Caco-2 (cell line): ENCODE measurements at regions of chr3 and their contacts with region 1.

Region 1: DNA sequence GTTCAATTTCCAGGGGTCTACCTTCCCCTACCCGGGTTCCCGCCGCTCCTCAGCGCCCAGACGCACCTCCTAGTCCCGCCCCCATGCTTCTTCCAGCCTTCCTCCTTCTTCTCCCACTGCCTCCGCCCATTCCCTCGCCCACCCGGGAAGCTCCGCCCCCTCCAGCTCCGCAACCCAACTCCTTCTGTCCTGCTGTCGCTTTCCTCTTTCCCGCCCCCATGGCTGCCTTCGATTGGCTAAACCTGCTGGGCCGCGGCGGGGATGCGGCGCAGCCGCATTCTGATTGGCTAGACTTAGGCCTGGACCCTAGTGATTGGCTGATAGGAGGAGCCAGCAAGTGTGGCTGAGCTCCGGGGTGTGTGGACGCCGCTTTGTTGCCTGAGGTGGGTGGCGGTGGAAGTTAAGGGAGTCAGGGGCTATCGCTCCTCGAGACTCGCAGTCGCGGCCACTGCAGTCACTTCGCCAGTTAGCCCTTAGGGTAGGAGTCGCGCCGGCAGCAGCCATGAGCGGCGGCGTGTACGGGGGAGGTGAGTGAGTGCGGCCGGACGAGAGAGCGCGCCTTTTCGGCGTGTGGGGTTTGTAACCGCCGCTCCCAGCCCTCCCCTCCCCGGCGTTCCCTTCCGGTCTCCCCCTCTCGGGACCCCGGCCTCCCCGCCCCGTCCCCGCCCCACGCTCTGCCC is at the start of gene ACTL6A:
- DNase-seq: peak; percentile 99 to 100
- H3K4me3 ChIP-seq: peak within 1 kb of the TSS; percentile 78
- H3K4me3 Mint-ChIP-seq: peak within 1 kb of the TSS; percentile 97
- H3K27ac Mint-ChIP-seq: peak within 1 kb of the TSS; percentile 96
- H3K4me1 ChIP-seq: peaks cover 5% of the 10 kb centered on the region; the same call in 1 of the 2 replicates
- H3K4me1 Mint-ChIP-seq: peaks cover 6% of the 10 kb centered on the region
- H3K27me3 ChIP-seq: no peaks in the 10 kb centered on the region
- H3K27me3 Mint-ChIP-seq: no peaks in the 10 kb centered on the region
- CTCF ChIP-seq: no peak
- total RNA-seq, gene ACTL6A: 75.0 and 89.2 TPM in 2 replicates

Region 2: GRCh38 chr3:179015551-179016020 is 547.1 kb before region 1 on chr3:
- CTCF ChIA-PET with region 1: no interaction called
- POLR2A ChIA-PET with region 1: no interaction called
- intact Hi-C with region 1: loop called (anchors 10 kb)
- DNase-seq: peak; percentile 47 to 80
- H3K4me3 ChIP-seq: no peak overlapping the region
- H3K4me3 Mint-ChIP-seq: no peak overlapping the region
- H3K27ac Mint-ChIP-seq: no peak overlapping the region
- H3K4me1 ChIP-seq: no peaks in the 10 kb centered on the region
- H3K4me1 Mint-ChIP-seq: no peaks in the 10 kb centered on the region
- H3K27me3 ChIP-seq: no peaks in the 10 kb centered on the region
- H3K27me3 Mint-ChIP-seq: peaks cover 2% of the 10 kb centered on the region
- CTCF ChIP-seq: peak; percentile 78 to 81

Region 3: DNA sequence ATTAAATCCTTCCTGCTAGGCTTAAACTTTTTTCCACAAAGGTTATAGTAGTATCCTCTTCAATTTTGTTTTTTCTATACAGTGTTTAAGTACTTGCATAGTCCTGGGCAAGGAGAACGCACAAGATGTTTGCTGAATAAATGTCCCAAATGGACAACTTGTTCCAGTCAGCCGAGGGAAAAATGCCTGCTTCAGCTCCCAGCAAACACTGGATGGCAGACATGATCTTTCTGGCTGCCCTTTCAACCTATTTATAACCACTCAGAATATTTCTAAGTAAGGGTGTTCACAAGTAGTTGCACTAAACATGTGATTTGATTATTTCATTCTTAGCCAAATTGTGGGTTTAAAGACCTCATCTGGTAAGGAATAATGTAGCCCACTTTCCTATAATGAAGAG is 141.2 kb before region 1 on chr3:
- CTCF ChIA-PET with region 1: interaction called, 7 read pairs
- POLR2A ChIA-PET with region 1: no interaction called
- intact Hi-C with region 1: loop called (anchors 1 kb)
- DNase-seq: peak in 1 of 2 experiments; percentile 27
- H3K4me3 ChIP-seq: no peak overlapping the region
- H3K4me3 Mint-ChIP-seq: no peak overlapping the region
- H3K27ac Mint-ChIP-seq: no peak overlapping the region
- H3K4me1 ChIP-seq: no peaks in the 10 kb centered on the region
- H3K4me1 Mint-ChIP-seq: no peaks in the 10 kb centered on the region
- H3K27me3 ChIP-seq: no peaks in the 10 kb centered on the region
- H3K27me3 Mint-ChIP-seq: no peaks in the 10 kb centered on the region
- CTCF ChIP-seq: peak; percentile 36 to 45

Region 4: GRCh38 chr3:179446501-179446900 is 116.2 kb before region 1 on chr3:
- CTCF ChIA-PET with region 1: interaction called, 9 read pairs
- POLR2A ChIA-PET with region 1: interaction called, 6 read pairs
- intact Hi-C with region 1: loop called (anchors 1 kb)
- DNase-seq: peak in 1 of 2 experiments; percentile 44
- H3K4me3 ChIP-seq: no peak overlapping the region
- H3K4me3 Mint-ChIP-seq: no peak overlapping the region
- H3K27ac Mint-ChIP-seq: no peak overlapping the region
- H3K4me1 ChIP-seq: no peaks in the 10 kb centered on the region
- H3K4me1 Mint-ChIP-seq: peaks cover under 1% of the 10 kb centered on the region
- H3K27me3 ChIP-seq: no peaks in the 10 kb centered on the region
- H3K27me3 Mint-ChIP-seq: peaks cover 5% of the 10 kb centered on the region
- CTCF ChIP-seq: peak; percentile 45 to 52

Region 5: DNA sequence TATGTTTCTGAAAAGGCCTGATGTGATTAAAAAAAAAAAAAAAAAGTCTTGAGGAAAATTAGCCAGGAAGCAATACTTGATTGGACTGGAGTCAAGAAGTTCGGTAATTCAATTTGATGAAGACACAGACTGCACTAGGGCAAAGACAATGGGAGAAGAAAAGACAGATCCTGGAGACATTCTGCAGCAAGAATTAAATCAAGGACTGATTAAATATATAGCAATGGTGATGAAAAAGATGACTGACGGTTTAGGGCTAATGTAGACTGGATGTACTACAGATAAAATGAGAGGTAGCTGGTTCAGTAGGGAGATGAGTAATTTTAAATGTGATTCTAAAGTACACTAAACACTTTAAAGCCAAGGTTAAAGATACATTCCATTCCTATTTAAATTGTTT is 27.9 kb after region 1 on chr3:
- CTCF ChIA-PET with region 1: no interaction called
- POLR2A ChIA-PET with region 1: no interaction called
- intact Hi-C with region 1: no loop called
- DNase-seq: no peak
- H3K4me3 ChIP-seq: no peak overlapping the region
- H3K4me3 Mint-ChIP-seq: no peak overlapping the region
- H3K27ac Mint-ChIP-seq: no peak overlapping the region
- H3K4me1 ChIP-seq: no peaks in the 10 kb centered on the region
- H3K4me1 Mint-ChIP-seq: no peaks in the 10 kb centered on the region
- H3K27me3 ChIP-seq: no peaks in the 10 kb centered on the region
- H3K27me3 Mint-ChIP-seq: no peaks in the 10 kb centered on the region
- CTCF ChIP-seq: no peak

Region 6: DNA sequence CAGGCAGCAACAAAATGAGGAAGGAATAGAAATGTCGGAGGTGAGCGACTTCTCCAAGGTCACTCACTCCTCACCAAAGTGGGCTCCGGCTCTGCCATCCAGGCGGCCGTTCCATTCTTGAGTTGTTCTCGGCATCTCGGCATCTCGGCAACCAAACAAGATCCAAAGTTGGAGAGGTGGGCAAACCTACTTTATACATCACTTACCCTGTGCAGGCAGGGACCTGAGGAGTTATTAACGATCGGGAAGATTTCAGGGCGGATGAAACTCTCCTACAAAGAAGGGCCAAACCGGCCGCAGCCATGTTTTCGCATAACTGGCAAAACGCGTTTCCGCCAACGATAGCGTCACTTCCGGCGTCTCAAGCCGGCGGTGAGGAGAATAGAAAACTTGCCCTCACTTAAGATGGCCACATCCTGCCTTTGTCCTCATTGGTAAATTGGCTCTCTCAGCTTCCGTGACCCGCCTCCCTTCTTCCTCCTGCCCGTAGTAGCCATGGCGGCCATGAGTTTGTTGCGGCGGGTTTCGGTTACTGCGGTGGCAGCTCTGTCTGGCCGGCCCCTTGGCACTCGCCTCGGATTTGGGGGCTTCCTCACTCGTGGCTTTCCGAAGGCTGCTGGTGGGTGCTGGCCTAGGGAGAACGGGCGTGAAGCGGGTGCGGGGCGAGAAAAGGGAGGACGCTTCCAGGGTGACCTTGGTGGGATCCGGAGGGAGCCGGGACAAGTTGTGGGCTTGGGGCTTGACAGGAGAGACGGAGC is 41.8 kb after region 1 on chr3 and contains the starts of genes MRPL47 and NDUFB5:
- CTCF ChIA-PET with region 1: no interaction called
- POLR2A ChIA-PET with region 1: interaction called, 3 read pairs
- intact Hi-C with region 1: loop called (anchors 1 kb)
- DNase-seq: peak; percentile 90 to 91
- H3K4me3 ChIP-seq: peak within 1 kb of the TSS; percentile 76
- H3K4me3 Mint-ChIP-seq: peak within 1 kb of the TSS; percentile 97
- H3K27ac Mint-ChIP-seq: peak within 1 kb of the TSS; percentile 99
- H3K4me1 ChIP-seq: peaks cover 7% of the 10 kb centered on the region; the same call in 1 of the 2 replicates
- H3K4me1 Mint-ChIP-seq: no peaks in the 10 kb centered on the region
- H3K27me3 ChIP-seq: no peaks in the 10 kb centered on the region
- H3K27me3 Mint-ChIP-seq: no peaks in the 10 kb centered on the region
- CTCF ChIP-seq: no peak
- total RNA-seq, gene MRPL47: 69.3 and 71.3 TPM in 2 replicates
- total RNA-seq, gene NDUFB5: 78.8 and 81.2 TPM in 2 replicates

Region 7: DNA sequence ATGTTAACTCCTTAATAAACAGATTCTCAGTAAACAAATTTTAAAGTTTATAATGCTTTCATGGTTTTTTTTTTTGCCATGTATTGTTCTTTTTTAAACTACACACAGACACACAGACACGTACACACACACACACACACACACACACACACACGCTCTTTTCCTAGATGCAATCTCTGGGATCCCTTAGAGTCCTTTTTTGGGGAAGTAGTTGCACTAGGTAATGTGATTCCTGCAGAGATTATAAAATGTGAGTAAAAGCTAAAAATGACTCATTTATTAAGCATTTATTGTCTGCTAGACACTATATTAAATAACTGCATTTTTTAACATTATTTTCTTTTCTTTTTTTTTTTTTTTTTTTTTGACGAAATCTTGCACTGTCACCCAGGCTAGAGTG is 61.7 kb after region 1 on chr3:
- CTCF ChIA-PET with region 1: no interaction called
- POLR2A ChIA-PET with region 1: no interaction called
- intact Hi-C with region 1: no loop called
- DNase-seq: no peak
- H3K4me3 ChIP-seq: no peak overlapping the region
- H3K4me3 Mint-ChIP-seq: no peak overlapping the region
- H3K27ac Mint-ChIP-seq: no peak overlapping the region
- H3K4me1 ChIP-seq: no peaks in the 10 kb centered on the region
- H3K4me1 Mint-ChIP-seq: no peaks in the 10 kb centered on the region
- H3K27me3 ChIP-seq: no peaks in the 10 kb centered on the region
- H3K27me3 Mint-ChIP-seq: no peaks in the 10 kb centered on the region
- CTCF ChIP-seq: no peak

Region 8: GRCh38 chr3:179706233-179706632 is 143.5 kb after region 1 on chr3:
- CTCF ChIA-PET with region 1: no interaction called
- POLR2A ChIA-PET with region 1: no interaction called
- intact Hi-C with region 1: no loop called
- DNase-seq: no peak
- H3K4me3 ChIP-seq: no peak overlapping the region
- H3K4me3 Mint-ChIP-seq: no peak overlapping the region
- H3K27ac Mint-ChIP-seq: no peak overlapping the region
- H3K4me1 ChIP-seq: no peaks in the 10 kb centered on the region
- H3K4me1 Mint-ChIP-seq: no peaks in the 10 kb centered on the region
- H3K27me3 ChIP-seq: no peaks in the 10 kb centered on the region
- H3K27me3 Mint-ChIP-seq: no peaks in the 10 kb centered on the region
- CTCF ChIP-seq: no peak